Ovary (tissue), 10 donors: ENCODE measurements at regions of chr20 and their contacts with region 1.

Region 1: GRCh38 chr20:40970201-40970600 is 58.4 kb upstream of the TOP1 start:
- DNase-seq: no peak
- H3K4me3 ChIP-seq: no peak overlapping the region
- H3K27ac ChIP-seq: no peak overlapping the region
- H3K4me1 ChIP-seq: peaks cover 2% of the 10 kb centered on the region
- H3K27me3 ChIP-seq: no peaks in the 10 kb centered on the region
- CTCF ChIP-seq: no peak
- EP300 ChIP-seq: no peak
- POLR2A ChIP-seq: no peak

Region 2: GRCh38 chr20:41095110-41095969 is 125.1 kb after region 1 on chr20:
- intact Hi-C with region 1: loop called in 2 of 4 experiments (anchors 2 to 10 kb)
- DNase-seq: peak; percentile 22 to 74 (median 61)
- H3K4me3 ChIP-seq: no peak overlapping the region
- H3K27ac ChIP-seq: no peak overlapping the region
- H3K4me1 ChIP-seq: no peaks in the 10 kb centered on the region
- H3K27me3 ChIP-seq: no peaks in the 10 kb centered on the region
- CTCF ChIP-seq: peak; percentile 61 to 75 (median 64)
- EP300 ChIP-seq: no peak
- POLR2A ChIP-seq: no peak